Heart right ventricle (tissue), 16 donors: ENCODE measurements at regions of chr11 and their contacts with region 1.

Region 1: DNA sequence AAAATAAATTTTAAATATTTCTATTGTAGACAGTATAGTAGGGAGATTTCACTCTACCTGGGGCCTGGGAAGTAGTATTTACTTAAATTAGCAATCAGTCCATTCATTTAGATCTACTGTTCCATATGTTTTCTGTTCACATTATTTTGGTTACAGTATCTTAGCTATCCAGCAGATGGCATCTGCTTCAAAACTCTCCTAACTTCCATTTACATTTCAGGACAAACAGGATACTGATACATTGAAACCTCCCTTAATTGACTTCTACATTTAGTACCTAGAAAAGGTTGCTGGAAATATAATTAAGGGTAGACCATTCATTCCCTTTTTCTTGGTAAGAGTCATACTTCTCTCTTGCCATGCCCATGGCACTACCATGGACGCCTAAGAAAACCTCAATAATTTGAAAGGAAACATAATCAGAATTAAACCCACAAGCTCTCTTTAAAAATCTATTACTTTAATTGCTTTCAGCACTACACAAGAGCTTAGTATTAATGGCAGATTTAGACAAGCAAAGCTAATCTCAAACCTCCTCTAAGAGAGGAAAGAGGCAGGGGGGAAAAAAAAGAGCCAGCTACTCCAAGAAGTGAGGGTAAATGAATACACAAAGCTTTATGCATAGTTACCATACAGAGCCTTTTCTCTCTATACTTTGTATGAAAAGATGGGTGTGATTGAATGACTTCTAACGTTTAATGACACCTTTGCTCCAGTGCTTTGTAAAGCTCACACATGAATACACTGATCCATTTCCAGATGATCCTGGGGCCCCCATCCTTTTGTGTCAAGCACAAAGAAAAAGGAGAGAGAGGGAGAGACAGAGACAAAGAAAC is 131.2 kb upstream of the MTMR2 start:
- DNase-seq: no peak
- ATAC-seq: peak in 5 of 8 donors; percentile 6 to 56 (median 50)
- H3K4me3 ChIP-seq: no peak overlapping the region
- H3K27ac ChIP-seq: peak overlapping the region in 2 of 10 donors; percentile 2 to 19
- H3K4me1 ChIP-seq: peaks cover 0 to 52% (median 23%) of the 10 kb centered on the region in 9 donors
- H3K27me3 ChIP-seq: no peaks in the 10 kb centered on the region
- CTCF ChIP-seq: peak; percentile 48 to 83 (median 65)

Region 2: DNA sequence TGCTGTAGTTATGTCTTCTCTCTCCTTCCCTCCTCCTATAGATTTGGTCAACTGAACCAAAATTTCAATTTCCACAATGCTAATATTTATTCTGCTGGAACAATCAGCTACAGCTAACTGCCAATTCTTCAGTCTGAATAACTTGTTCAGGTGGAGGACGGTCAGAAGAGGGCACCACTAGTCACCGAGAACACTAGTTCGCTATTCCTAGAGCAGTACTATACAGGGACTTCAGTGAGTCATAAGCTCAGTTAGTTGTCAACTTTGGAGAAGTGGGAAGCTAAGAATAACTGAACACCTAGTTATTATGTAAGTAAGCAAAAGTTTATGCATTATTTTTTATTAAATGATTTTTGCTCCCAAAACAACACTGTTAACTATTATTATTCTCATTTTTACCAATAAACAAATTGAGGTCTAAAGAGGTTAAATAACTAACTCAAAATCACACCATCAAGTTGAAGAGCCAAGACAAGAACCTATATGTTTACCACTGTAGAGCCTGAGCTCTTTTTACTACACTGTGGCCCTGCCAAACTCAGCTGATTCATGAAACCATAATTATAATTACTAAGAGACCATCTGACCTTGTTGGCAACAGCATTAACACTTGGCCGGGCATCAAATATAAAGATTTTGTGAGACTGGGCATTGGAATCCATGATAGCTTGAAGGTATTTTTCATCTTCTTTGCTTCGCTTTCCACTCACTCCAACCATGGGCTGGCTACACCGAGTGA is 205.8 kb before region 1 on chr11:
- intact Hi-C with region 1: loop called in 2 of 10 experiments (anchors 5 to 10 kb)
- DNase-seq: peak in 1 of 2 donors; percentile 55
- ATAC-seq: peak; percentile 76 to 97 (median 92)
- H3K4me3 ChIP-seq: no peak overlapping the region
- H3K27ac ChIP-seq: peak overlapping the region in 3 of 10 donors; percentile 8 to 42 (median 33)
- H3K4me1 ChIP-seq: peaks cover 0 to 13% (median 0%) of the 10 kb centered on the region in 9 donors
- H3K27me3 ChIP-seq: no peaks in the 10 kb centered on the region
- CTCF ChIP-seq: peak; percentile 15 to 71 (median 59)

Region 3: GRCh38 chr11:96161307-96162089 is 106.4 kb after region 1 on chr11:
- intact Hi-C with region 1: no loop called
- DNase-seq: no peak
- ATAC-seq: no peak
- H3K4me3 ChIP-seq: no peak overlapping the region
- H3K27ac ChIP-seq: peak overlapping the region in 8 of 10 donors; percentile 23 to 79 (median 64)
- H3K4me1 ChIP-seq: peaks cover 2 to 65% (median 45%) of the 10 kb centered on the region in 9 donors
- H3K27me3 ChIP-seq: no peaks in the 10 kb centered on the region
- CTCF ChIP-seq: no peak

Region 4: DNA sequence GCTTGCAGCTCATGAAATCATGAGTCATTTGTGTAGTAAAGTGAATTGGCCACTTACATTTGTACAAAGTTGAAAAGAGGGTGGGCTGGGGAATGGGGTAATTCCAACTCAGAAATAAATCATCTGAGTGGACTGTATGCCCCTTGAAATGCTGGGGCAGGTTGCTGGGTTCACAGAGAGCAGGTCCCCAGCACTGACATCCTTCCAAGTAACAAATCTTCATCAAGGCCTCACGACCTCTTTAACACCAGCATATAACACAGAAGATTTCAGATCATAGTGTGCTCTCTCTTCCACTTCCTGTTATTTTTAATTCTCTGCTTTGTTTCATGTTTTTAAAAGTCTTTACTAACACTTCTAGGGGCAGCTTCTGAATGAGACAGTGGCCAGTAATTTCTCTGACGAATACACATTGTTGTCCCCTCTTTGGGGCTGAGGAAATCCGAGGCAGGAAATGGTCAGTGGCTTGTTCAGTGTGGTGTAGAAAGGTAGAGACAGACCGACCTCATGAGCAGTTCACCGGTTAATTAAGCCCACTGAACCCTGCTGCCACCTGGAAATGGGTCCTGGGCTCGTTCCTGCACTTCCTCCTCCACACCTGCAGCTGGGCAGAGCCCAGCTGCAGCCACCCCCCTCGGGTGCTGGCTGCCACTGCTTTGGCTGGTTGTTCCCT is 160.2 kb after region 1 on chr11:
- intact Hi-C with region 1: loop called in 2 of 10 experiments (anchors 10 kb)
- DNase-seq: no peak
- ATAC-seq: peak in 6 of 8 donors; percentile 18 to 46 (median 39)
- H3K4me3 ChIP-seq: no peak overlapping the region
- H3K27ac ChIP-seq: peak overlapping the region in 9 of 10 donors; percentile 46 to 84 (median 71)
- H3K4me1 ChIP-seq: peaks cover 12 to 82% (median 73%) of the 10 kb centered on the region in 9 donors
- H3K27me3 ChIP-seq: no peaks in the 10 kb centered on the region
- CTCF ChIP-seq: no peak

Region 5: DNA sequence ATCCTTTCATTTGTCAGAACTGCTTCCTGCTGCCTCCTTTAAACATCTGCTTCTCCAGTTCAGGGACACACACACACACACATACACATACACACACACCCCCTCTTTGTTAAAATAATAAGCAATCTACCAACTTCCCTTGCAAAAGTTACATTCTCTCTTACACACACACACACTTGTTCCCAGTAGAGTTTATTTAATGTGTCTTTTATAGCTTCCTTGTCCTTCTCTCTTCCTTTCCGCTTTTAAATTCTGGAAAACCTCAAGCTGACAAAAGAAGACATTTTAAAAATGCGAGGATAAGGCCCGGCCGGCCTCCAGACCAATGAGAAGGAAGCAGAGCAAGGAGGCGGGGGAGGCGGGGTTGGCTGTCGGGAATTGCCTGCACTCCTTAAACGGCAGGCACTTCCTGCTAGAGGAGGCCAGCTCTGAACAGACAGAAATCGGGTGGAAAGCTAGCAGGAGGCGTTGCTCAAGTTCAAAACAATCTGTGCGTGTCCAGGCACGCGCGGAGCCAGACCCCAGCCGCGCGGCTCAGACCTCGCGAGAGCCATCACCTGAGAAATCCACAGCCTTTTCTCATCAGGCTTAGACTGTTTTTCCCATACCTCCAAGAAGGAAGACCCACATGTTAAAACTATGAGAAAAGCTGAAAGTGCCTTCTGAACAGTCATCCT is 188.0 kb after region 1 on chr11:
- intact Hi-C with region 1: loop called in 1 of 10 experiments (anchors 10 kb)
- DNase-seq: peak; percentile 90 to 96
- ATAC-seq: peak; percentile 98 to 100 (median 99)
- H3K4me3 ChIP-seq: peak overlapping the region in 9 of 10 donors; percentile 20 to 60 (median 53)
- H3K27ac ChIP-seq: peak overlapping the region; percentile 50 to 90 (median 78)
- H3K4me1 ChIP-seq: peaks cover 0 to 50% (median 18%) of the 10 kb centered on the region in 9 donors
- H3K27me3 ChIP-seq: no peaks in the 10 kb centered on the region
- CTCF ChIP-seq: no peak

Region 6: GRCh38 chr11:96396637-96397036 is 341.5 kb after region 1 on chr11:
- intact Hi-C with region 1: no loop called
- DNase-seq: no peak
- ATAC-seq: no peak
- H3K4me3 ChIP-seq: no peak overlapping the region
- H3K27ac ChIP-seq: no peak overlapping the region
- H3K4me1 ChIP-seq: peaks cover 0 to 14% (median 0%) of the 10 kb centered on the region in 9 donors
- H3K27me3 ChIP-seq: no peaks in the 10 kb centered on the region
- CTCF ChIP-seq: no peak